H1 (cell line): ENCODE measurements at regions of chr15 and their contacts with region 1.

Region 1: GRCh38 chr15:65841121-65841925 is 28.0 kb upstream of the RAB11A start:
- DNase-seq: no peak
- H3K4me3 ChIP-seq: no peak overlapping the region
- H3K27ac ChIP-seq: no peak overlapping the region
- H3K4me1 ChIP-seq: no peaks in the 10 kb centered on the region
- H3K27me3 ChIP-seq: no peaks in the 10 kb centered on the region
- CTCF ChIP-seq: no peak
- EP300 ChIP-seq: no peak
- POLR2A ChIP-seq: no peak
- RAD21 ChIP-seq: no peak

Region 2: DNA sequence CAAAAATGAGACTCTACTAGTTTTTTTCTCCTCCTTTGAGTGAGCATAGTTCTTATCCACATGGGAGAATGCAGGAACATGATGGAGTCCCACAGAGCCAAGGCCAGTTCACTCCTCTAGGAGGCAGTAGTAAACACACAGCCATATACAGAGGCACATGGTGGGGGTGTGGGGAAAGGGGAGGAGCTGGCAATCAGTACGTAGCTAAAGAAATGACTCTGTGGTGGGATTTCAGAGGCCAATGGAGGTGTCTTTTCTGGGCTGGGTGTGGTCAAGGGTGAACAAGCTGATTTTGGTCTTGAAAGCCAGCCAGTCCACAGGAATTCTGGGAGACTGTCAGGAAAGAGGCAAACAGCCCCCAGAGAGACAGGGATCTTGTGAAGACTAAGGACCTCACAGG is 21.4 kb after region 1 on chr15:
- CTCF ChIA-PET with region 1: interaction called, 35 read pairs
- POLR2A ChIA-PET with region 1: no interaction called
- DNase-seq: peak; percentile 69 to 76
- H3K4me3 ChIP-seq: no peak overlapping the region
- H3K27ac ChIP-seq: no peak overlapping the region
- H3K4me1 ChIP-seq: no peaks in the 10 kb centered on the region; a peak in 1 of 7 replicates
- H3K27me3 ChIP-seq: no peaks in the 10 kb centered on the region
- CTCF ChIP-seq: peak; percentile 58 to 82 (median 65)
- EP300 ChIP-seq: no peak
- POLR2A ChIP-seq: no peak
- RAD21 ChIP-seq: peak; percentile 26 to 49; a peak in 3 of 4 replicates

Region 3: DNA sequence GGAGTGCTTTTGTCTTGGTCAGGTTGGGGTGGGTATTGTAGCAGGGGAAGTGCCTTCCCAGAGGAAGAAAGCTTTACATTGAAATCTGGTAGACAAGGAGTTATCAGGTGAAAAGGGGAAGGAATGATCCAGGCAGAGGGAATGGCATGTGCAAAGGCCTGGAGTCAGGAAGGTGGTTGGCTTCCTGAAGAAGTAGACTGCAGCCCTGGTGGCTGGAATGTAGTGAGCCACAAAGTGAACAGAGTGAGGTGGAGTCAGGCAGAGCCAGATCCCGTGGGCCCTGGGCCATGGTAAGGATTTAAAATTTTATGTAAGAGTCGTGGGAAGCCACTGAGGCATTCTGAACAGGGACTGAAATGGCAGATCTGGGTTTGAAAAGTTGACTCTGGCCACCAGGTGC is 86.2 kb after region 1 on chr15:
- CTCF ChIA-PET with region 1: no interaction called
- POLR2A ChIA-PET with region 1: no interaction called
- DNase-seq: no peak
- H3K4me3 ChIP-seq: no peak overlapping the region
- H3K27ac ChIP-seq: no peak overlapping the region
- H3K4me1 ChIP-seq: peaks cover 0 to 2% (median 0%) of the 10 kb centered on the region in 4 experiments; a peak in 3 of 7 replicates
- H3K27me3 ChIP-seq: no peaks in the 10 kb centered on the region
- CTCF ChIP-seq: peak; percentile 20 to 59 (median 45); a peak in 3 of 4 replicates
- EP300 ChIP-seq: no peak
- POLR2A ChIP-seq: no peak
- RAD21 ChIP-seq: peak; percentile 25 to 28; a peak in 2 of 4 replicates